Panc1 (cell line): ENCODE measurements at regions of chr9 and their contacts with region 1.

Region 1: DNA sequence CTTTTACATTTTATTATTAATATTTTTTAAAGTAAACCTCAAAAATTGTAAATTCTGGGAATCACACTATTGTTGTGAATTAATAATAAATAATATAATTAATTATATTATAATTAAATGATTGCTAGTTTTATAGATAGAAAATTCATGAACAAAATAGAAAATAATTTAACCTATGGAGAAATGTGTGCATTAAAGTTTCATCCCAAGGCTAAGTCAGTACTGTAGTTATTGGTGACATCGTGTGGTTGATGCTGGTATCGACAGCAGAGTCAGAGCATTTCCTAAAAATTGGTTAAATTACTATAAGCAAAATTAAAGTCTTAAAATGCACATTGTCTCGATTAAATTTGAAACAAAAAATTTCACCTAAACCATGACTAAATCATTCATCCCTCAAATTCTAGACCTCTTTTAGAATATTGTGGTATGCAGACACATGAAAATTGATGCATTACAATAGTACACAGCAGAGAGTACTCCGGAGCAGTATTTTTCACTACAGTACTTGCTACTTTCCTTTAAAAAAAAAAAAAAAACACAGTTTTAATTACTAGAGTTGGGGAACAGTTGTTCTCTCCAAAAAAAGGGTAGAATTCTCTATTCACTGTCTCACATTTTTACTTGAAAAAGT is 73.9 kb downstream of the RORB start:
- DNase-seq: peak; percentile 17
- ATAC-seq: no peak
- H3K4me3 ChIP-seq: no peak overlapping the region
- H3K27ac ChIP-seq: no peak overlapping the region
- H3K4me1 ChIP-seq: no peaks in the 10 kb centered on the region
- H3K27me3 ChIP-seq: no peaks in the 10 kb centered on the region
- CTCF ChIP-seq: peak; percentile 50; the same call in 1 of the 2 replicates

Region 2: GRCh38 chr9:73200694-73201452 is 1370.1 kb before region 1 on chr9:
- CTCF ChIA-PET with region 1: no interaction called
- POLR2A ChIA-PET with region 1: no interaction called
- in situ Hi-C with region 1: no loop called
- intact Hi-C with region 1: loop called (anchors 10 kb)
- DNase-seq: no peak
- ATAC-seq: no peak
- H3K4me3 ChIP-seq: no peak overlapping the region
- H3K27ac ChIP-seq: no peak overlapping the region
- H3K4me1 ChIP-seq: no peaks in the 10 kb centered on the region
- H3K27me3 ChIP-seq: no peaks in the 10 kb centered on the region
- CTCF ChIP-seq: peak; percentile 11; the same call in 1 of the 2 replicates

Region 3: DNA sequence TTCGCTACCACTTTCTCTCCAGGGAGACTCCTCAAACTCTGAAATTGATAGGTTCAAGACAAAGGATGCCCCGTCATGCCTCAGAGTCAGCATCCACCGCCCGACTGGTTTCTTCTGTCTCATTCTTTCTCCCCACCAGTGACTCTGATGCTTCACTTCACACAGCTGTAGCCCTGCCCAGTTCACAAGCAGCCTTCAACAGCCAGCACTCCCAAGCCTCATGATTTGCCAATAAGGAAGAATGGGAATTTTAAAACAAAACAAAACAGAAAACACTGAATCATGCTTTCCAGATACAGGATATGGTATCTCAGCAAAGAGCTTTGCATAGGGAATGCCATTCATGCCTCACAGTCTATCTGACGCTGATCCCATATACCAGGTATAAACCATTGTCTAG is 445.1 kb before region 1 on chr9:
- CTCF ChIA-PET with region 1: no interaction called
- POLR2A ChIA-PET with region 1: no interaction called
- in situ Hi-C with region 1: no loop called
- intact Hi-C with region 1: no loop called
- DNase-seq: no peak
- ATAC-seq: no peak
- H3K4me3 ChIP-seq: no peak overlapping the region
- H3K27ac ChIP-seq: no peak overlapping the region
- H3K4me1 ChIP-seq: no peaks in the 10 kb centered on the region
- H3K27me3 ChIP-seq: no peaks in the 10 kb centered on the region
- CTCF ChIP-seq: no peak

Region 4: GRCh38 chr9:74366111-74366510 is 204.9 kb before region 1 on chr9:
- CTCF ChIA-PET with region 1: no interaction called
- POLR2A ChIA-PET with region 1: no interaction called
- in situ Hi-C with region 1: no loop called
- intact Hi-C with region 1: no loop called
- DNase-seq: no peak
- ATAC-seq: no peak
- H3K4me3 ChIP-seq: no peak overlapping the region
- H3K27ac ChIP-seq: no peak overlapping the region
- H3K4me1 ChIP-seq: no peaks in the 10 kb centered on the region
- H3K27me3 ChIP-seq: no peaks in the 10 kb centered on the region
- CTCF ChIP-seq: no peak

Region 5: GRCh38 chr9:74499111-74499601 is 71.8 kb before region 1 on chr9:
- CTCF ChIA-PET with region 1: no interaction called
- POLR2A ChIA-PET with region 1: no interaction called
- in situ Hi-C with region 1: no loop called
- intact Hi-C with region 1: no loop called
- DNase-seq: no peak
- ATAC-seq: no peak
- H3K4me3 ChIP-seq: no peak overlapping the region; a peak in 1 of 4 replicates
- H3K27ac ChIP-seq: no peak overlapping the region
- H3K4me1 ChIP-seq: no peaks in the 10 kb centered on the region; the same call in 1 of the 2 replicates
- H3K27me3 ChIP-seq: peaks cover 5% of the 10 kb centered on the region; the same call in 1 of the 2 replicates
- CTCF ChIP-seq: no peak

Region 6: GRCh38 chr9:74589576-74589975 is 18.6 kb after region 1 on chr9:
- CTCF ChIA-PET with region 1: no interaction called
- POLR2A ChIA-PET with region 1: interaction called, 18 read pairs
- in situ Hi-C with region 1: no loop called
- intact Hi-C with region 1: no loop called
- DNase-seq: no peak
- ATAC-seq: no peak
- H3K4me3 ChIP-seq: no peak overlapping the region
- H3K27ac ChIP-seq: no peak overlapping the region
- H3K4me1 ChIP-seq: no peaks in the 10 kb centered on the region
- H3K27me3 ChIP-seq: no peaks in the 10 kb centered on the region
- CTCF ChIP-seq: no peak